ENCODE measurements at regions of chr14 and their contacts with region 1.

Region 1: DNA sequence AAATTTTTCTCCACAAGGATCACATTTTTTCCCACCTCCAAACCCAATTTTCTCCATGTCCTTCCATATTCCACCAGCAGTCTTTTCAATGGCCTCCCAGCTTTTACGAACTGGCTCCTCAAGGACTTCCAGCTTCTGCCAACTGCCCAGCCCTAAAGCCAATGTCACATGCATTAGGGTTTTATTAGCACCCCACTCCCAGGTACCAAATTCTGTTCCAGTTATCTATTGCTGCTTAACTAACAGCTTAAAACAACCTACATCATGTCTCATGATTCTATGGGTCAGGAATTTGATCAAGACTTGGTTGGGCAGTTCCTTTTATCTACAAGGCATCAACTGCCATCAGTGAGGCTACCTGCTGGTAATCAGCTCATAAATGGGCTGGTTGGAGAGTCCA is 151.3 kb downstream of the SPTSSA start:
- DNase-seq: no peak
- H3K4me3 Mint-ChIP-seq: no peak overlapping the region
- H3K27ac Mint-ChIP-seq: no peak overlapping the region
- H3K4me1 Mint-ChIP-seq: no peaks in the 10 kb centered on the region
- H3K27me3 Mint-ChIP-seq: peaks cover 24% of the 10 kb centered on the region

Region 2: DNA sequence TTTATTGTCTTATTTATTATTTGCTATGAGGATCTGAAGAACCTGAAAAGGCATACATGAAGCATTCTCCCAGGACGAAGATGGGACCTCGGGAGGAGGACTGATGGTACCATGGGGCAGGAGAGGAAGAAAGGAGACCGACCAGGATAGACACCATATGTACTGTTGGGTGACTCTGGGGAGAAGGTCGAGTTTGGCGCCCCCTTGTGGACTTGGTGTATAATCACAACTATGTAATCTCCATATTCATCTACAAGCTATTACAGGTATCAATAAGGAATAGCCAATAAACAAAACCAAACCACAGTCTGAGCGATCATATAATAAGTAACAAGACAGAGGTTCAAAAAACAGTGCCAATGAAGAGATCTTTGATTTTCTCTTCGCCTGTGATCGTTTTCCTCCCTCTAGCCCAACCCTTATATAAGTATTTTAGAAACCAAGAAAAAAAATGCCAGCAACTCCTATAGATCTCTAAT is 12.3 kb after region 1 on chr14:
- CTCF ChIA-PET with region 1: interaction called, 11 read pairs
- POLR2A ChIA-PET with region 1: no interaction called
- DNase-seq: peak; percentile 82
- H3K4me3 Mint-ChIP-seq: no peak overlapping the region
- H3K27ac Mint-ChIP-seq: no peak overlapping the region
- H3K4me1 Mint-ChIP-seq: no peaks in the 10 kb centered on the region
- H3K27me3 Mint-ChIP-seq: peaks cover 8% of the 10 kb centered on the region

Measured in activated CD4-positive, alpha-beta T cell treated with anti-CD3 and anti-CD28 coated beads, Interleukin-2, amount 10 ng/mL, durations not matched to agents 7 days and 5 days (primary cell).